ENCODE measurements at regions of chr9 and their contacts with region 1.

Region 1: GRCh38 chr9:129783516-129784361 is 19.2 kb upstream of the TOR1B start:
- DNase-seq: peak; percentile 64 to 84
- H3K4me3 ChIP-seq: no peak overlapping the region
- H3K4me1 ChIP-seq: no peaks in the 10 kb centered on the region
- H3K27me3 ChIP-seq: peaks cover 16% of the 10 kb centered on the region

Region 2: DNA sequence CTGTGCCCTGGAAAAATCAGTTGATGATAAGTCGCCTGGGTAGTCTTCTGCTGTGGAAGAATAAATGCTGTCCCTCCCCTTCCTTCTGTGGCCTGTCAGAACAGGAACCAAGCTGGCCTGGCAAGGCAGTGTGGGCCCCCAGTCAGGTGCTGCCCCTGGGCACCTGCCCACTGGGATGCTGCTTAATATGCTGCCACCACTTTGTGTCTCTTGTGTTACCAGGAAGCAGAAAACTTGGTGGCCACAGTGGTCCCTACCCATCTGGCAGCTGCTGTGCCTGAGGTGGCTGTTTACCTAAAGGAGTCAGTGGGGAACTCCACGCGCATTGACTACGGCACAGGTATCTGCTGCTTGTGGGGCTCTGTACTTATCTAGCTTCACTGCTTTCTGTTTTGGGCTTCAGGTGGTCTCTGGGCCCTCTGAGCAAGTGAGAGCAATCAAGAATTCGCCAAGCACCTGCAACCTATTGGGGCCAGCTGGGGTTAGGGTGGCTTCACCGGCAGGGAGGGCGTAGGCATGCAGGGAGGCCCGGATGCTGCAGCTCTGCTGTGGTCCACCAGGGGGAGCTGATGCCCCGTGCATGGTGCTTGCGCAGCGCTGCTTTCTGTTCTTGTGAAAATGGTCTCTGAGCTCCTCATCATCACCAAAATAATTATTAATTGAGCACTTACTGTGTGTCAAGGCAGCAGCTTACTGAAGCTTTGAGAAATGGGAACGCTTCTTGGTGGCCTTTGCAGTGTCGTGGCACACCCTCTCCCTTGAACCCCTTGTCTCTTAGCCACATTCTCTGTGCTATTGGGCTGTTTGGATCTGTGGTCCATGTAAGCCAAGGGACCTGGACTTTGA is 652.2 kb before region 1 on chr9:
- in situ Hi-C with region 1: loop called (anchors 5 kb)
- DNase-seq: peak; percentile 46 to 87
- H3K4me3 ChIP-seq: no peak overlapping the region
- H3K4me1 ChIP-seq: no peaks in the 10 kb centered on the region
- H3K27me3 ChIP-seq: no peaks in the 10 kb centered on the region

Region 3: DNA sequence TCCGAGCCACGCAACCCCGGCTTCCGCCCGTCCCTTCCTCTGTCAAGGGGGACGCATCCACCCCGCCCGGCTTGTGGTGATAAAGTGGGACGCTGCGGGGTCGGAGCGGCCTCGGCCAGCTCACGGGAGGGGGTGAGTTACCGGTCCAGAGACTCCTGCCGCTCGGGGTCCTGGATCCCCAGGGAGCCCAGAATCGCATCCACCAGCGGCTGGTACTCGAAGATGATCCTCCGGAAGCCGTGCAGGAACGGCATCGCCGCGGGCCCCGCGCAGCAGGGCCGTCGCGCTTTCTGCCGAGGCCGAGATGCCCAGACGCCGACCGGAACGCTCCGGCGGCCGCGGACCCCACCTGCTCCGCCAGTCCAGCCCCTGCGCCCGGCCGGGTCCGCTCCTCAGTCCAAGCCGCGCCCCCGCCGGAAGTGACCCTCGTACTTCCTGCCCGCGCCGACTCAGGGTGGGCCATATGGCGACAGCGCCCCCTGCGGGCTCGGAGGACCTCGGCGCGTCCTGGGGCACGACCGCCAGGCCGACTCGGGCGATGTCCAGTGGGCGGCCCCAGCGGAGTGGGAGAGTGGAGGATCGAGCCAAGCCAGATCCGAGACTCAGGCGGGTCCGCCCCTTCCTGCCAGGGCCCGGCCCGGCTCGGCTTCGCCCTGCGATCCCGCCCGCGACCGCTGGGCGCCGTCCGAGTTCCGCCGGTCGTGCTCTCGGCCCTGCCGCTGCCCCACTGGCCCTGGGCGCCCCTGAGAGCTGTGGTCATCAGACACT is 141.8 kb before region 1 on chr9 and contains the start of gene ASB6:
- in situ Hi-C with region 1: loop called (anchors 5 kb)
- DNase-seq: peak; percentile 91 to 99
- H3K4me3 ChIP-seq: peak within 1 kb of the TSS; percentile 83
- H3K4me1 ChIP-seq: peaks cover 15% of the 10 kb centered on the region
- H3K27me3 ChIP-seq: no peaks in the 10 kb centered on the region

Region 4: DNA sequence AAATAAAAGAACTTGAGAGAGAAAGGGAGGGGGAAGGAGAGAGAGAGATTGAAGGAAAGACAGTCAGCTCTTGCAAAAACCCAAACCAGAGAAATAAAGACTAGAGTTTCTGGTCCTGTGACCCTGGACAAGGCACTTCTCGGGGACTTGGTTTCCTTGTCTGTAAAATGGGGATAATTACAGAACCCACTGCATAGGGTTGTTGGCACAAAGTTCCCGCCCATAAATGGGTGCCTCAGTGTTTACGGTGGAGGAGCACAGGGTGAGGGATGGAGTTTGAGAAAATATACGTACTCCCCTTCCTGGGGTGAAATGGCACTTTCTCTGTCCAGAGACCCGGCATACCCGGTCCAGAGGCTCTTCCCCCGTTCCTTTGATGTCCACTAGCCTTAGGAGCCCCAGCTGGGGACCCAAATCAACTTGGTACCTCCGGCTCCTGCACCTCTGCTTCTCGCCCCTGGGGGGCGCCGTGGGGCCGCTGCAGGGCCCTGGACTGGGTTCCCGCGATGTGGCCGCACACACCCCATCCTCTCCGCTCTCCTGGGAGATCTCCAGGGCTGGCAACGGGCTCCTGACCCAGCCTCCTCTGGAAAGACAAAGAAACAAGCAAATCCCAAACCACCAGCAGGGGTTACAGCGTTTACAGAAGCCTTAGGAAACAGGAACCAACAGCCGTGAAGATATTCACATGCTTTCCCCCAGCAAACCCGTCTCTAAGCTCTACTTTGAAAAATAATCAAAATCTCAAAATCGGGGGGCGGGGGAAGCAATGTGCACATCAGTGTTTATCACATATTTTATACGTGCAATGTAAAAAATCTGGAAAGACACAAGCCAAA is 57.2 kb before region 1 on chr9:
- in situ Hi-C with region 1: loop called (anchors 5 kb)
- DNase-seq: peak; percentile 86 to 94
- H3K4me3 ChIP-seq: no peak overlapping the region
- H3K4me1 ChIP-seq: peaks cover 4% of the 10 kb centered on the region; the same call in 1 of the 2 replicates
- H3K27me3 ChIP-seq: no peaks in the 10 kb centered on the region

Region 5: GRCh38 chr9:129884220-129885017 is 100.7 kb after region 1 on chr9:
- in situ Hi-C with region 1: no loop called
- DNase-seq: peak; percentile 87 to 97
- H3K4me3 ChIP-seq: peak overlapping the region; percentile 31
- H3K4me1 ChIP-seq: peaks cover 15% of the 10 kb centered on the region
- H3K27me3 ChIP-seq: no peaks in the 10 kb centered on the region

Measured in HAP-1 (cell line).